Caco-2 (cell line): ENCODE measurements at regions of chr9 and their contacts with region 1.

Region 1: DNA sequence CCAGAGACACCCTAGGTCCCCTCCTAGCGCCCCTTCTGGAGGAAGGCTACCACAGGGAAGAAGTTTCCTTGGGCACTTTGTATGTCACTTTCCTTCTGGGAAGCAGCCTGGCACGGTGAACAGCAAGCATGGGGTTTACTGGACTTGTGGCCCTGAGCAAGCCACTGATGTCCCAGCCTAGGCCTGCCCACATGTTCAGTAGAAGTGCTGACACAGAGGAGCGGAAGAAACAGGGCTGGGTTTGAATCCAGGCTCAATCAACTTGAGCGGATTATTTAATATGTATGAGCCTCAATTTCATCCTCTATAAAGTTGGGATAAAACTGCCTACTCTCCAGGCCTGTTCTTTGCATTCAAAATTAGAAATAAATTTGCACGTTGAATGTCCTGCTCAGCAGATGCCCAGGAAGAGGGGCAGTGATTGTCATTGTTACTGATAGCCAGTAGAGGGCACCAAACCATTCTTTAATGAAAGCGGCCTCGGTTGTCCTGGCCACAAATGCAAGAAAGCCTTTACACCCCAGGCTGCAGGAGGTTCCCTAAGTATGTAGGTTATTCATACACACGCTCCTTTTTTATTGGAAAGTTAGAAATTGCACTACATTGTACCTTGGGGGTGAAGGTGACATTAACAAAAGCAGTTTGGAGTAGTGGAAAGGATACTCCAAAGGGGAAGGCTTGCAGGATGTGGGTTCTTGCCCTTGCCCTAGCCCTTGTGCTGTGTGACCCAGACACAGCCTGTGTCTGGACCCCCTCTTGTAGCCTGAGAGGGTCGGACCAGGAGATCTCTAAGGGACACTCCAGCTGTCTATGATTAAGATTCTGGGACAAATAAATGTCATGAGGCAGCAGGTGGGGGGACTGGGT is 13.4 kb upstream of the XPA start:
- DNase-seq: peak; percentile 61 to 72
- H3K4me3 ChIP-seq: no peak overlapping the region
- H3K4me3 Mint-ChIP-seq: no peak overlapping the region
- H3K27ac Mint-ChIP-seq: no peak overlapping the region
- H3K4me1 ChIP-seq: peaks cover 35% of the 10 kb centered on the region
- H3K4me1 Mint-ChIP-seq: peaks cover 11% of the 10 kb centered on the region
- H3K27me3 ChIP-seq: no peaks in the 10 kb centered on the region
- H3K27me3 Mint-ChIP-seq: no peaks in the 10 kb centered on the region
- CTCF ChIP-seq: peak; percentile 80 to 83

Region 2: DNA sequence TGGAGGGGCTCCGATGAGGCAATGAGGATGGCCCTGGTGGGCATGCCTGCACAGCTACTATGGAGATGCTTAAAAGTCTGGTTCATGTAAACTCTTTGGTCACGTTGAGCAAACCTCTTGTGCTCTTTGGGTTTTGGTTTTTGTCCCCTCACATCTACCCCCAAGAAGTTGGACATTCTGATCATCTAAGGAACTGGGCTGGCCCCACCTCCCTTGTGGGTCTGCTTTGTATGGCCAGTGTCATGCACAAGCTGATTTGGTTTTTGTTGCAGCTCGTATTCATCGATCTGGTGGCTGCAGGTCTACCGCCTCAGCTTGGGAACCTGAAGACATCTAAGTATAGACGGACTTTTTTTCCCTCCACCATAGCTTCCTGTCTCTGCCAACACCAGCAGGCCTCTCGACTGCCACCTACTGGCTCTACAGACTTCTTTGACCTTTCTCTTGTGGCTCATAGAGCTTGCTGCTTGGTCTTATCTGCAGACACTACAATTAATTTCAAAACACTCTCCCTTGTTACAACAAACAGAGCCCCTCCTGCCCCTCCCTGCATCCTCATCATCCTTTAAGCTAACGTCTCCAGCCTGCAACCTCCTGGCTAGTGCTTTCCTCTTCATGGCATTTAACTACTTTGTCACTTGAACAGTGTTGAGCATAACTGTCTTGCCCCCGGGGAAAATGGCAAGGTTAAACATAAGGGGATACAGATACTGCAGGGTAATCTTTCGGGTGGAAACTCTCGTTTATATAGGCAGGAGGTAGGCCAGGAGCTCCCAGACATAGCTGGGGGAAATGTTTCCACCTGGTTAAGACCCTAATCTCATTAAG is 111.9 kb before region 1 on chr9:
- CTCF ChIA-PET with region 1: interaction called, 12 read pairs
- POLR2A ChIA-PET with region 1: no interaction called
- intact Hi-C with region 1: no loop called
- DNase-seq: peak; percentile 80 to 82
- H3K4me3 ChIP-seq: no peak overlapping the region
- H3K4me3 Mint-ChIP-seq: no peak overlapping the region
- H3K27ac Mint-ChIP-seq: no peak overlapping the region
- H3K4me1 ChIP-seq: 0 out of 2 replicates have a peak, but pooled peaks cover 3% of the 10 kb centered on the region
- H3K4me1 Mint-ChIP-seq: peaks cover 8% of the 10 kb centered on the region
- H3K27me3 ChIP-seq: no peaks in the 10 kb centered on the region
- H3K27me3 Mint-ChIP-seq: no peaks in the 10 kb centered on the region
- CTCF ChIP-seq: peak; percentile 83 to 93

Region 3: GRCh38 chr9:97747201-97747965 is 36.8 kb after region 1 on chr9:
- CTCF ChIA-PET with region 1: interaction called, 3 read pairs
- POLR2A ChIA-PET with region 1: interaction called, 5 read pairs
- intact Hi-C with region 1: loop called (anchors 1 kb)
- DNase-seq: peak; percentile 84 to 88
- H3K4me3 ChIP-seq: no peak overlapping the region
- H3K4me3 Mint-ChIP-seq: peak overlapping the region; percentile 71
- H3K27ac Mint-ChIP-seq: peak overlapping the region; percentile 85
- H3K4me1 ChIP-seq: peaks cover 81% of the 10 kb centered on the region
- H3K4me1 Mint-ChIP-seq: peaks cover 65% of the 10 kb centered on the region
- H3K27me3 ChIP-seq: no peaks in the 10 kb centered on the region
- H3K27me3 Mint-ChIP-seq: no peaks in the 10 kb centered on the region
- CTCF ChIP-seq: no peak

Region 4: GRCh38 chr9:97781902-97782301 is 71.3 kb after region 1 on chr9:
- CTCF ChIA-PET with region 1: interaction called, 3 read pairs
- POLR2A ChIA-PET with region 1: no interaction called
- intact Hi-C with region 1: loop called (anchors 1 kb)
- DNase-seq: peak; percentile 51 to 53
- H3K4me3 ChIP-seq: no peak overlapping the region
- H3K4me3 Mint-ChIP-seq: no peak overlapping the region
- H3K27ac Mint-ChIP-seq: no peak overlapping the region
- H3K4me1 ChIP-seq: peaks cover 14% of the 10 kb centered on the region
- H3K4me1 Mint-ChIP-seq: peaks cover 11% of the 10 kb centered on the region
- H3K27me3 ChIP-seq: no peaks in the 10 kb centered on the region
- H3K27me3 Mint-ChIP-seq: no peaks in the 10 kb centered on the region
- CTCF ChIP-seq: peak in 1 of 2 experiments; percentile 34

Region 5: GRCh38 chr9:97890038-97890437 is 179.4 kb after region 1 on chr9:
- CTCF ChIA-PET with region 1: no interaction called
- POLR2A ChIA-PET with region 1: no interaction called
- intact Hi-C with region 1: loop called (anchors 2 kb)
- DNase-seq: peak in 1 of 2 experiments; percentile 56
- H3K4me3 ChIP-seq: no peak overlapping the region
- H3K4me3 Mint-ChIP-seq: no peak overlapping the region
- H3K27ac Mint-ChIP-seq: no peak overlapping the region
- H3K4me1 ChIP-seq: no peaks in the 10 kb centered on the region
- H3K4me1 Mint-ChIP-seq: no peaks in the 10 kb centered on the region
- H3K27me3 ChIP-seq: no peaks in the 10 kb centered on the region
- H3K27me3 Mint-ChIP-seq: no peaks in the 10 kb centered on the region
- CTCF ChIP-seq: peak; percentile 50 to 60

Region 6: DNA sequence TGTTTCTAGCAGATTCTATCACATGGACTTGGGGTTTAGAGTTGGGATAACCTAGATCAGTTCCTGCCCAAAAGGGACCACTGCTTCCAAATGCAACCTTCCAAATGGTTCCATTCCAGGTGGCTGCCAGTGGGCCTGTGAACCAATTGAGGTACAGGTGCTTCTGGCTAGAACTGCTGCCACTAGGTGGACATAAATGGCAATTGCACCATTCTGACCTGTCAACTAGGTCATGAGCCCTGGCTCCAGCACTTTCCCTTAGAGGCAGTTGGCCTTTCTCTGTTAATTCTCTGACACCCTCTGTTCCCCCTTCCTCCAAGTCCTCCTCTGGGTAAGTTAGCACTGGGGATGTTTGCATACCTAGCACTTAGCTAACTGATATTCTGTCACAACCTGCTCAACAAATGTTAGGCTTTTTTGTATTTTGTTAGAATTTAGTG is 244.0 kb after region 1 on chr9:
- CTCF ChIA-PET with region 1: no interaction called
- POLR2A ChIA-PET with region 1: no interaction called
- intact Hi-C with region 1: loop called (anchors 2 kb)
- DNase-seq: peak; percentile 70 to 77
- H3K4me3 ChIP-seq: no peak overlapping the region
- H3K4me3 Mint-ChIP-seq: no peak overlapping the region
- H3K27ac Mint-ChIP-seq: no peak overlapping the region
- H3K4me1 ChIP-seq: no peaks in the 10 kb centered on the region
- H3K4me1 Mint-ChIP-seq: no peaks in the 10 kb centered on the region
- H3K27me3 ChIP-seq: no peaks in the 10 kb centered on the region
- H3K27me3 Mint-ChIP-seq: peaks cover 6% of the 10 kb centered on the region
- CTCF ChIP-seq: peak; percentile 74 to 76